Vagina (tissue), 2 donors: ENCODE measurements at regions of chr10 and their contacts with region 1.

Region 1: GRCh38 chr10:132168571-132169030 is 18.1 kb upstream of the DPYSL4 start:
- DNase-seq: no peak
- H3K4me3 ChIP-seq: no peak overlapping the region
- H3K27ac ChIP-seq: no peak overlapping the region
- H3K4me1 ChIP-seq: no peaks in the 10 kb centered on the region
- H3K27me3 ChIP-seq: no peaks in the 10 kb centered on the region
- CTCF ChIP-seq: no peak
- POLR2A ChIP-seq: no peak

Region 2: DNA sequence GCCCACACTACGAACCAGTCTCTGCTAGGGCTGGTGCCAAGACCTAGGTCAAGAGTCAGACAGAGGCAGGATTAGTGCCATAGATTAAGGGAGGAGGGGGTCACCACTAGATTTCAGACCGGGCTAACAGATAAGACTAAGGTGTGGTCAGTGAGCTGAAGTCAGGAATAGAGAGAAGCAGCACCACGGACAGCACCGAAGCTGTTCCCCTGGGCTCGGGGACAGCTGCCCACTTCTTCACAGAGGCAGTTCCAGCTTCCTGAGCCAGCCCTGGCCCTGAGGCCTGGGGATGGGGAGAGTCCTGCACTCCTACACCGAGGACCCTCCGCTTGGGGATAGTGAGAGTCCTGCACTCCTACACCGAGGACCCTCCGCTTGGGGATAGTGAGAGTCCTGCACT is 114.0 kb before region 1 on chr10:
- intact Hi-C with region 1: no loop called
- DNase-seq: no peak
- H3K4me3 ChIP-seq: no peak overlapping the region
- H3K27ac ChIP-seq: no peak overlapping the region
- H3K4me1 ChIP-seq: no peaks in the 10 kb centered on the region
- H3K27me3 ChIP-seq: no peaks in the 10 kb centered on the region
- CTCF ChIP-seq: no peak
- POLR2A ChIP-seq: no peak

Region 3: DNA sequence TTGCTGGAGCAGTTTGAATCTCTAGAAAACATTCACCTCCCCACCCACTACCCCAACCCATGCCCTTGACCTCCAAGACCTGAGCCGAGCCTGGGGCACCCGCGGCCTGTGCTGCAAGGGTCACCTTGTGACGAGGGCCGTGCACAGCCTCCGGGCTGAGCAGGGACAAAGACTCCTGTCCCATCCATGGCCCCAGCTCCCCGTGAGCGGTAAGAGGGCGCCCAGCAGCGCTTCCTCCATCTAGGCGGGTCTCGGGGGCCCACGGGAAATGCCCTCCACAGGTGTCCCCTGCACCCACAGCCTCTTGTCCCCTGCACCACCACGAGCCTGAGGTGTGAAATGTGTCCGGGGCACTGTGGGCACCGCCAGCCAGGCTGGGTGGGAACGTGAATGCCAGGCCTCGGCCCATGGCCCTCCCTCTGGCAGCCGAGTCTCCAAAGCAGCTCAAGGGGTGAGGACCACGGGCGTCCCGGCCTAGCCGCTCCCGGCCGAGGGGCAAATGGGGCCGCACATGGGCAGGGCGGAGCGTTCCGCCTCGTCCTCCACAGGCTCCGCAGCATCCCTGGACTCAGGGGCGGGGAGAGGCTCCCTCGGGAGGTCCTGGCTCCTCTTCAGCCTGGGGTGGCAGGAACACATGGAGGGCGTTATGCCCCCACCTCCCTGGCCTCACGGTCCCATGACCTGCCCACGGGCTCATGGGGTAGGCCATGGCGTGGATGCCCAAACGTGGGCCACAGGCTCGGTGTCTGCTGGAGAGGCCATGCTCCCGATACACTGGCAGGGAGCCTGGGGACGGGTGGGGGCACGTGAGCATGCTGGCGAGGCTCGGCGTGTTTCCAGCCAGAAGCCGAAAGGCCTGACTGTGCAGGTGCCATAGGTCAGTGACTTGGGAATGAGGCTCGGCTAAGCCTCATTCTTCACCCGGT is 39.2 kb after region 1 on chr10:
- intact Hi-C with region 1: loop called (anchors 1 kb)
- DNase-seq: no peak
- H3K4me3 ChIP-seq: no peak overlapping the region
- H3K27ac ChIP-seq: no peak overlapping the region
- H3K4me1 ChIP-seq: no peaks in the 10 kb centered on the region
- H3K27me3 ChIP-seq: no peaks in the 10 kb centered on the region
- CTCF ChIP-seq: no peak
- POLR2A ChIP-seq: no peak

Region 4: DNA sequence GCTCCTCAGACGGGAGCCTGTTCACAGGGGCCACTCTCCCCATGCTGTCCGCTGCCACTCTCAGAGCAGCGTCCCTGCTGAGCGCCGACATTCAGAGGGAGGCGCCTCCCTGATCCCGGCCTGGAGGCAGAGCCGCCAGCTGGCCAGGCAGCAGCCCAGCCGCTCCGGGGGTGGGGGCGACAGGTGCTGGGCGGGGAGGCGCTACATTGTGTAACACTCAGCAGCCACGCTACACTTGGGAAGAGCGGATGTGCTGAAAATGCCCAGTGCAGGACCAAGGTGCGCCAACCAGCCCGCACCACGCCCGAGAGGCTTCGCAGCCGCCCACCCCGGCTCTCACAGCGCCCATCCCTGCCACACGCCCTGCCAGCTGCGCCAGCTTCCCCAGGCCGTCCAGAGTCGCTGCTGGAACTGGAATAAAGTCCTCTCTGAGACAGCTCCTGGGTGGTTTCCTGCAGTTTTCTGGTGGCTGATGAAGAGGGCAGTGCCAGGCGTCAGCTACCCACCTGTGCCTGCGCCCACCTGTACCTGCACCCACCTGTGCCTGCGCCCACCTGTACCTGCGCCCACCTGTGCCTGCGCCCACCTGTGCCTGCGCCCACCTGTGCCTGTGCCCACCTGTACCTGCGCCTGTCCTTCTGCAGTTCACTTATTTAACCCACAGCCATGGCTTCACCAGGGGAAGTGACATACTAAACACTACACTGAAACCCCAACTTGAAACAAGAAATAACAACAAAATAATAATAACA is 113.5 kb after region 1 on chr10:
- intact Hi-C with region 1: no loop called
- DNase-seq: no peak
- H3K4me3 ChIP-seq: no peak overlapping the region
- H3K27ac ChIP-seq: no peak overlapping the region
- H3K4me1 ChIP-seq: peaks cover 6% of the 10 kb centered on the region
- H3K27me3 ChIP-seq: no peaks in the 10 kb centered on the region
- CTCF ChIP-seq: no peak
- POLR2A ChIP-seq: no peak